Adrenal gland (tissue), 19 donors: ENCODE measurements at regions of chr11 and their contacts with region 1.

Region 1: DNA sequence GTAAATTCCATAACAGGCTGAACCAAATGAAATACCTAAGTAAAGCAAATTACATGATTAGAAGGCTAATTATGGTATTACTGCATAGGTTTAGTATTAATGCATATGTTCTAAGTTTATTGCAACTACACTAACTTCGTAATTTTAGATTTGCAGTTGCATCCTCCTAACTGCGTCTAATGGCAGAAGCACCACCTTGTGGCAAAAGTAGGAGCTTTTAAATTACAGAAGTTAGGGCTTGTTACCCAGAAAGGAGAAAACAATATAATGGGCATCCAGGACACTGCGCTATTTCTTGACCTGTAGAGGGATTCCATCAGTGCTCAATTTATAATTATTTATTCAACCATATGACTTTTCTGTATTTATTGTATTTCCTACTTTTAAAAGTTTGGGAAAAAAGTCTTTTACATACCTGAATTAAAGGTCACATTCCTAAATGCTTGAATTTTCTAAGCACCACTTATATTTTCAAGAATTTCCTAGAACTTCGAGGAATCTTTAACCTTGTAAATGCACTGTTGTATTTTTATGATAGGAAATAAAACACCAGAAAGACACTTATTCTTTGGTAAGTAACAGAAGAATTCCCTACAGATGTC is 16.3 kb upstream of the GPR83 start:
- DNase-seq: no peak
- H3K4me3 ChIP-seq: no peak overlapping the region
- H3K27ac ChIP-seq: no peak overlapping the region
- H3K4me1 ChIP-seq: no peaks in the 10 kb centered on the region
- H3K27me3 ChIP-seq: no peaks in the 10 kb centered on the region
- CTCF ChIP-seq: peak; percentile 24 to 59 (median 46)
- POLR2A ChIP-seq: no peak

Region 2: DNA sequence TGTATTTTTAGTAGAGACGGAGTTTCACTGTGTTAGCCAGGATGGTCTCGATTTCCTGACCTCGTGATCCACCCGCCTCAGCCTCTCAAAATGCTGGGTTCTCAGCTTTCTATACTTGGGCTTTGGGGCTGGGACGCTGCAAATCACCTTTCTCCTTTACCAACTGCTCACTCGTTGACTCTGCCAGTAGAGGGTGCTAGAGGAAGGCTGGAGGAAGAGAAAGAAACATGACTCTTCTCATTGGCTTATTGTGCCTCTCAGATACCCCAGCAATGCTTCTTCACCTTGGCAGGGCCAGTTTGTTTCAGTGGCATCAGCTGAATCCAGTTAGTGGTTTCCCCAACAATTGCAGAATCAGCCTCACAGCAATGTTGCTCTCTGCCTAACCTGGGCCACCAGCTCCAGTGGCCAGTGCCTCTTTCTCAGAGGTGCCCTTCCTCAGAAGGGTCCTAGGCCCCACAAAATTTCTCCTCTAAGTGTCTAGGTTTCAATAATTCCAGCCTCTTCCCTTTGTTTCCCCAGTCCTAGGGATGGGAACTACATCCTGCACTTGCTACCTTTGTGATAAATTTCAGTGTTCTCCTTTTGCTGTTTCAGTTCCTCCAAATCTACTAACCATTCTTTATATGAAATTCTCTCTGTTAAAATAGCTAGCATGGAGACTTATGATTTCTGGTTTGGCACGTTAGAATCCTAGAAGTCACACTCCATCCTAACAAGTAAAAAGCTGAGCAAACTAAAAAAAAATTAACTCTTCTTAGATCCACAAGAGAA is 495.6 kb before region 1 on chr11:
- intact Hi-C with region 1: loop called in 1 of 2 experiments (anchors 10 kb)
- DNase-seq: peak; percentile 49 to 69 (median 55)
- H3K4me3 ChIP-seq: no peak overlapping the region
- H3K27ac ChIP-seq: no peak overlapping the region
- H3K4me1 ChIP-seq: no peaks in the 10 kb centered on the region
- H3K27me3 ChIP-seq: peaks cover 3% of the 10 kb centered on the region
- CTCF ChIP-seq: peak; percentile 32 to 70 (median 63)
- POLR2A ChIP-seq: no peak

Region 3: DNA sequence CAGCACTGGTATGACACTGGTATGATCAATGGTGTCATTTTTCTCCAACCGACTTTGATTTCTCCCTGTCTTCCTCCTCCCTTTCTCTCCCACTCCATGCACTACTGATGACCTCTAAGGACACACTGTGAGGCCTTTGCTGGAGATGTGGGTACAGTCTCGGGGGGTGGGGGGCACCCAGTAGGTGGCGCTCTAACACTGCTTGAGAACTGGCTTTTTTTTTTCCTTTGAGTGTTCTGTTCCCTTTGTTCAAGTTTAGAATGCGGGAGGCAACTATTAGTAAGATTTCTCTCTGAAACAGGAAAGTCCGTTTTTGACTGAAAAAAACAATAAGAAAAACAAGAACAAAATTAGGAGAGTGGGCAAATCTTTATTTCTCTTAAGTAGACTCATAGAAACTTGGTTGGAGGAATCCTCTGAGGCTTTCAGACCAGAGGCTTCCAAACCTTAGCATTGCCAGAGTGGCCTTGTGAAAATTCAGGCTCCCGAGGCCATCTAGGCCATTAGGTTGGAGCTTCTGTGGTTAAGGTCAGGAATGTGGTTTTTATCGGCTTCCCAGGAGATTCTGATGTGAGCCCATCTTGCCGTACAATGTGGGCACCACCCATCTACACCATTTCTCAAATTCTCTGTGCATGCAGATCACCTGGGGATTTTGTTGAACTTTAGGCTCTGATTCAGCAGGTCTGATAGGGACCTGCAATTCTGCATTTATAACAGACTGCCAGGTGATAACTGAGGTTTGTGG is 245.6 kb before region 1 on chr11:
- intact Hi-C with region 1: loop called in 1 of 2 experiments (anchors 10 kb)
- DNase-seq: peak in 4 of 7 donors; percentile 22 to 65 (median 33)
- H3K4me3 ChIP-seq: no peak overlapping the region
- H3K27ac ChIP-seq: no peak overlapping the region
- H3K4me1 ChIP-seq: peaks cover 0 to 5% of the 10 kb centered on the region in 2 donors
- H3K27me3 ChIP-seq: no peaks in the 10 kb centered on the region
- CTCF ChIP-seq: peak; percentile 17 to 59 (median 31)
- POLR2A ChIP-seq: no peak

Region 4: DNA sequence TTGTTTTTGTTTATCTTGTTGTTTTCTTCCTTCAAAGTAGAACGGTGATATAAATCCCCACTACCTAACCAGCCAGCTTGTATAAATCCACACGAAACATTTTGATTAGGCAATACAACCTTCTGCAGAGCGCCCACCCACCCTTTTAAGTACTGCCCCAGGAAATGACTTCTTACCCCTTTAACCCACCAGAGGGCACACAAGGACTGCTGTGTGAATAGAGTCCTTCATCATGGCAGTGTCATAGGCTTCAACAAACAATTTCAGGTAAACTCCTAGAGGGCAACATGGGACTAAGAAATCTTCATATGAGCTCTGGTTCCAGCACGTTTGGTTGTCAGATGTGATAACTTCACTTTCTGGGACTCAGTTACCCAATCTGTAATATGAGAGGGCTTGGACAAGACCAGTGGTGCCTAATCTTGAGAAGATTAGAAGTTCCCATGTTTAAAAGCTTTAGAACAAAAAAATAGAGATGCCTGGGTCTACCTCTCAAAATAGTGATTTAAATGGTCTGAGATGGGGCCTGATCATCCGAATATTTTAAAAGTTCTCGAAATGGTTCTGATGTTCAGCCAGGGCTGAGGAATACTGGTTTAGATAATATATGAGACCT is 205.7 kb after region 1 on chr11:
- intact Hi-C with region 1: no loop called
- DNase-seq: peak; percentile 30 to 78 (median 46)
- H3K4me3 ChIP-seq: no peak overlapping the region
- H3K27ac ChIP-seq: no peak overlapping the region
- H3K4me1 ChIP-seq: no peaks in the 10 kb centered on the region
- H3K27me3 ChIP-seq: no peaks in the 10 kb centered on the region
- CTCF ChIP-seq: peak; percentile 50 to 93 (median 72)
- POLR2A ChIP-seq: no peak